PC-9 (cell line): ENCODE measurements at regions of chr7 and their contacts with region 1.

Region 1: DNA sequence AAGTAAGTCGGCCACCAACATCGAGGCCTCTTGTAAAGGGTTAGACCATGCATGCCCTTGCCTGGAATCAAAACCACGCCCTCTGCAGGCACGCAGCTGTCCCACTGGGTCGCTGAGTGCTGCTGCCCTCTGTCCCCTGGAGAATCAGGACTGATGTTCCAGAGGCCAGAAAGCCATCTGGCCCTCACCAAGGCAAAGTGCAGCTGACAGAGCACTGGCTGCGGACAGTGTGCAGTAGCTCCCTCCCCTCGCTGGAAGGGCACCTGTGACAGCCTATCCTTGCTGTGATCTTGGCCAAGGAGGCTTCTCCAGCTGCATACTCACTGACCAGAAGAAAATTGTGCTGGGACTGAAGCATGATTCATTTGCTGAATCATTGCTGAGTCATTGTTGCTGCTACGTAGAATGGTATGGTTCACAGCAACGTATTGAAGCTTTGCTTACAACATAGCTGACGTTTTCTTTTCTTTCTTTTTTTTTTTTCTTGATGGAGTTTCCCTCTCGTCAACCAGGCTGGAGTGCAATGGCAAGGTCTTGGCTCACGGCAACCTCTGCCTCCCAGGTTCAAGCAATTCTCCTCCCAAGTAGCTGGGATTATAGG is 30.4 kb downstream of the DDC start:
- DNase-seq: peak; percentile 96 to 100
- H3K4me3 ChIP-seq: peak overlapping the region; percentile 20; the same call in 1 of the 2 replicates
- H3K27ac ChIP-seq: peak overlapping the region; percentile 91
- H3K4me1 ChIP-seq: peaks cover 52% of the 10 kb centered on the region
- H3K27me3 ChIP-seq: no peaks in the 10 kb centered on the region
- CTCF ChIP-seq: no peak; the same call in none of the 2 replicates

Region 2: GRCh38 chr7:50513166-50513871 is 21.5 kb before region 1 on chr7:
- CTCF ChIA-PET with region 1: no interaction called
- POLR2A ChIA-PET with region 1: no interaction called
- intact Hi-C with region 1: no loop called
- DNase-seq: no peak
- H3K4me3 ChIP-seq: no peak overlapping the region
- H3K27ac ChIP-seq: no peak overlapping the region
- H3K4me1 ChIP-seq: no peaks in the 10 kb centered on the region
- H3K27me3 ChIP-seq: no peaks in the 10 kb centered on the region
- CTCF ChIP-seq: no peak

Region 3: DNA sequence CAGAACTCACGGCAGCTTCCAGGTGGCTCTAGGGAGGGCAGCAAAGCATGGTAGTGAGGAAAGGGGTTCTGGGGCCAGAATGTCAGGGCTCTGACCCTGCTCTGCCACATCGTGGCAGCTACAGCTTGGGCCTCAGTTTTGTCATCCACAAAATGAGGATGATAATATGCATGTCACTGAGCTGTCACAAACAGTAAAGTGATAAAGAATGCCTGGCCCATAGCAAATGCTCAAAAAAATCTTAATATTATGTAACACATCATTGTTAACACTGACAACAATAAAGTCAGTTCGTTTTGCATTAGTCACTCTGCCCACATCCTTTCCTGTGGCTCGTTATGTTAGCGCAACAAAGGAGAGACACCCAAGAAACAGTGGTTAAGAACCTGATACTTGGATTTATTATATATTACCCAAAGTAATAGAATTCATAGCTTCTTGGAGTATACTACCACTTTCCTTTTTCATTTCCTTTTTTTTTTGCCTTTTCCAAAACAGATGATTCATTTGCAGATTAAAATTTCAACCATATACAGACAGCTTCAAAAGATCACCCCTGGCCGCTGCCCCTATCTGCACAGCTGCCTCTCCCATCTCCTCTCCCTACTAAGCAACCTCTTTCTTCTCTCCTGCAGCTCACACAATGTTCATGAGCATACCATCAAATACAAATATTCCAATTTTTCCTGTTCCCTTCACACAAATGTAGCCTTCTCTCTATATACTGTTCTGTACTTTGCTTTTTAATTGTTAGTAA is 75.9 kb after region 1 on chr7:
- CTCF ChIA-PET with region 1: no interaction called
- POLR2A ChIA-PET with region 1: interaction called, 8 read pairs
- intact Hi-C with region 1: loop called (anchors 2 kb)
- DNase-seq: peak; percentile 14 to 45
- H3K4me3 ChIP-seq: no peak overlapping the region
- H3K27ac ChIP-seq: no peak overlapping the region
- H3K4me1 ChIP-seq: peaks cover 6% of the 10 kb centered on the region
- H3K27me3 ChIP-seq: no peaks in the 10 kb centered on the region
- CTCF ChIP-seq: no peak

Region 4: DNA sequence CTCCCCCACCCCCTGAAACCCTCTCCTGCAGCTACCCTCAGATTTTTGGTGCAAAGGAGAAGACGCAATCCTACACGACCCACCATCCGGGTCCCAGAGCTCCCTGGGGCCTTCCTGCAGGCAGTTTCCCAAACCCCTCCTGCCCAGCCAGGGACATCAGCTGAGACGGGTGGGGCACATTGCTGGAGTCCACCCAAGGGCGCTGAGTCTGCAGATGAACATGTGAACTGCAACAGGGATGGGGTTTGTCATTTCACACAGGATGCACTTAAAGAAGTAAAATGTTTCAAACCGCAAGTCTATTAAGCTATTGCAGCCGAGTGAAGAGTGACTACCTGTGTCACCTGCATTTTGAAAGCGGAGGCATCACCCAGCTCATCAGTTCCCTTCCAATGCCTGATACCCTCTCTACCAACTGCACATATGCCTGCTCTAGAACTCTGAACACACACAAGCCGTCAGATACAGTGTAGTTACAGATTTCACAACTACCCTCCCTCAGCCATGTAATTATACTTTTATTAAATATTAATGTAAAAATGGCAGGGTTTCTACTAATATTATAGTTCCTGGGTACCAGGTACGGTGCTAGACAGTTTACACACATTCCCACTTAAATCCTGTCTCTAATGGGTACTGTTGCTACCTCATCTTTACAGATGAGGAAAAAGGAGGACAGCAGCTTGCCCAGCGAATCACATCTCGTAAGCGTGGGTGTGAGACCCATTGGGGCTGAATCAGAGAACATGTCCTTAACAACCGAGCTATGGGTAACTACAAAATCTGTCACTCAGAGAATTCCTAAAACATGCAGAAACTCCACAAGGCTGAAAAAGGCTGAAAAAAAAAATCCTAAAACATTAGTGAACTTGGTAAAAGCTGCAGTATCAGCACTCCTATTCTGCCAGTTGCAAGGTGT is 176.7 kb after region 1 on chr7:
- CTCF ChIA-PET with region 1: interaction called, 4 read pairs
- POLR2A ChIA-PET with region 1: no interaction called
- intact Hi-C with region 1: loop called (anchors 2 kb)
- DNase-seq: peak in 1 of 2 experiments; percentile 22
- H3K4me3 ChIP-seq: no peak overlapping the region
- H3K27ac ChIP-seq: no peak overlapping the region
- H3K4me1 ChIP-seq: peaks cover 72% of the 10 kb centered on the region
- H3K27me3 ChIP-seq: no peaks in the 10 kb centered on the region
- CTCF ChIP-seq: no peak

Region 5: GRCh38 chr7:51263631-51264484 is 729.1 kb after region 1 on chr7:
- CTCF ChIA-PET with region 1: no interaction called
- POLR2A ChIA-PET with region 1: no interaction called
- intact Hi-C with region 1: loop called (anchors 1 kb)
- DNase-seq: peak; percentile 84 to 100
- H3K4me3 ChIP-seq: peak overlapping the region; percentile 45; the same call in 1 of the 2 replicates
- H3K27ac ChIP-seq: peak overlapping the region; percentile 68
- H3K4me1 ChIP-seq: peaks cover 36% of the 10 kb centered on the region
- H3K27me3 ChIP-seq: no peaks in the 10 kb centered on the region
- CTCF ChIP-seq: no peak

Region 6: DNA sequence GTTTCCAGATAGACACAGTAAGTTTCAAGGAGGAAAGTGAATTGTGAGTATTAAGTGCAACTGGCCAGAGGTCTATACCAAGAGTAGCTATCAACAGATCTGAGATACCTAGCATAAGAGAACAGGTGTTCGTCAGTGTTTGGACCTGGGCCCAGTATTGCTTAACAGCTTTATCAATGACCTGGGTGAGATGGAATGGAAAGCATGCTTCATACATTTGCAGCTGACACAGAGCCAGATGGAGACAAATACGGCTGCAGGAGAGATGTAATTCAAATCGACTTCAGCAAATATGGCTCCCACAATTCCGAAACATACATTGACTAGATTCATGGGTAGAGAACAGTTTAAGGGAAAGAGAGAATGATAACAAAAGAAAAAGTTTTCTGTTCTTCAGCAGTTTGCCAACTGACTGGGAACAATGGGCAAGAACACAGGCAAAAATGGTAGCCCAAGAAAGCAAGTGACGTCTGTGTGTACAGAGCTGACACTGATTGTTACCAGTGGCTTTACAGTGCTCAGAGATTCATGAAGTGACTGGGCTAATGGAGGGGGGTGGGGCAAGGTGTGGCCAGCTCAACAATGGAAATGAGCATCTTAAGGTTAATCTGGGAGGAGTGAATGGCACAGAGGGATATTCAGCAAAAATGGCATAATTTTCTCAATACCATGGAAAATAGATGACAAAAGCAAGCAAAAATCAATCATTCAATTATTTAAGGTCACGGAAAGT is 809.8 kb after region 1 on chr7:
- CTCF ChIA-PET with region 1: no interaction called
- POLR2A ChIA-PET with region 1: interaction called, 8 read pairs
- intact Hi-C with region 1: loop called (anchors 10 kb)
- DNase-seq: peak; percentile 56 to 93
- H3K4me3 ChIP-seq: no peak overlapping the region
- H3K27ac ChIP-seq: no peak overlapping the region
- H3K4me1 ChIP-seq: peaks cover 34% of the 10 kb centered on the region
- H3K27me3 ChIP-seq: no peaks in the 10 kb centered on the region
- CTCF ChIP-seq: no peak